ENCODE measurements at regions of chr3 and their contacts with region 1.

Region 1: DNA sequence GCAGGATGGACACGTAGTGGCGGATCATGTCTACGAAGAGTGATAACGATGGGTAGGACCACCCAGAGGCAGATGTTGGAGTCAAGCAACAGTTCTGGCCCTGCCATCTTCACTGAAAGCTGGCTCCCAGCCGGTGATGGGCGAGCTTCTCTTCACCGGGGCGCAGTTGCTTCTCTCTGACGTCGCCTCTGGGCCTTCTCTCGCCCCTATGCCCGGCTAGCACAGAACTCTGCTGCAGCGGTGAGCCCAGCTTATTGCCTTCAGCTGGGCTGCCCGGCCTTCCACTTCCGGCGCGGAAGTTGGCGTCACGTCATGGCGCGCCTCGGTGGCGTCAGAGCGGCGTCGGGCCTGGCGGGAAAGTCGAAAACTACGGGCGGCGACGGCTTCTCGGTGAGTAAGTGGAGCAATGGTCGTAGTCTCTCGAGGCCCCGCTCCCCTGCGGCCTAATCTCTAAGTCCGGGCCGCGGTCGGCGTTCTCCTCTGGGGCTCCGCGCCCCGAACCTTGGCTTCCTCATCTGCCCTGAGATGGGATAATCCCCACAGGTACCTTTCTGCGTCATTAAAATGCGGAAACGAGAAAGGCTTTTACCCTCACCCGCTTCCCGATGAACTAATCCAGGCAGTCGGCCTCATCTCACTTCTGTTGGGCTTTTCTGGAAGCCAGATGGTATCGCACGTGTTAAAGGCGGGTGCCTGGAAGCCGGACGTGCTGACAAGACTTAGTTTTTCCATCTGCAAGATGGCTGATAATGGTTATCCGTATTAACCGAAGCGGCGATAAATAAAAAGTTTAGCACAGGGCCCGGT is at the start of gene FANCD2:
- DNase-seq: peak; percentile 90
- H3K4me3 Mint-ChIP-seq: peak within 1 kb of the TSS; percentile 98
- H3K27ac Mint-ChIP-seq: peak within 1 kb of the TSS; percentile 99
- H3K4me1 Mint-ChIP-seq: peaks cover 33% of the 10 kb centered on the region
- H3K27me3 Mint-ChIP-seq: no peaks in the 10 kb centered on the region
- total RNA-seq, gene FANCD2: 63.4 and 64.2 TPM in 2 replicates

Region 2: DNA sequence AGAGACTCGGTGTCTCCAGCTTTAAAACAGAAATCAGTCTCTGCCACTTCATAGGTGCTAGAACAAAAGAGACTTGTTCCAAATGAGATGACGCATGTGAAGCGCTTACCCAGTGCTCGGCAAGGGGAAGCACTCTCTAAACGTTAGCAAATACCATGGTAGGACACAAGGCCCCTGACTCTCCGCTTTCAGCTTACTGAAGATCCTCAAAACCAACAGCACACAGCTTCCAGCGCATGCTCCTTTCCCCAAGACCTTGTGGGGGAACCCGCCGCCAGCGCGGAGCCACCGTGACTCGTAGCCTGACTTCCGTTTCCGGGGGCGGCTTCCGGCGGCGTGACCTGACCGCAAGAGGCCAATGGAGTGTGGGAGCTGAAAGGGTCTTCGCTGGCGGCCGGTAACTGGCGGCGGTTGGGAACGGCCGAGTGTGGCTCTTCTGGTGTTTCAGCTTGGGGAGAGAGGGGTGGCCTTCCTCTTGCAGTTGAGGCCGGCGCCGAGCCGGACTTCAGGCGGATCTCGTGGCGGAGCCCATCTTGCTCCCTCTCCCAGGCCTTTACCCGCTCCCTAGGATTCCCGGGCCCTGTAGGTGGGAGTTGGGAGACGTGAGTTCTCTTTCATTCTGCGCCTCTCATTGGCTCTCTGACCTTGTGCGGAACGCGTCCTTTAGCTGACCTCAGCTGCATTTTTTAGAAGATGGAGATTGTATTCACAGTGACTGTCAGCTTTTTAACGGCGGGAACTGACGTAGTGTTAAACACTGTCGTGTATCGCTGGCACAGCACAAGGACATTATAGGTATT is 663.4 kb before region 1 on chr3 and contains the start of gene THUMPD3:
- intact Hi-C with region 1: loop called (anchors 2 kb)
- DNase-seq: peak; percentile 90
- H3K4me3 Mint-ChIP-seq: peak within 1 kb of the TSS; percentile 96
- H3K27ac Mint-ChIP-seq: peak within 1 kb of the TSS; percentile 98
- H3K4me1 Mint-ChIP-seq: peaks cover 6% of the 10 kb centered on the region
- H3K27me3 Mint-ChIP-seq: peaks cover 2% of the 10 kb centered on the region
- total RNA-seq, gene THUMPD3: 61.4 and 62.4 TPM in 2 replicates

Region 3: DNA sequence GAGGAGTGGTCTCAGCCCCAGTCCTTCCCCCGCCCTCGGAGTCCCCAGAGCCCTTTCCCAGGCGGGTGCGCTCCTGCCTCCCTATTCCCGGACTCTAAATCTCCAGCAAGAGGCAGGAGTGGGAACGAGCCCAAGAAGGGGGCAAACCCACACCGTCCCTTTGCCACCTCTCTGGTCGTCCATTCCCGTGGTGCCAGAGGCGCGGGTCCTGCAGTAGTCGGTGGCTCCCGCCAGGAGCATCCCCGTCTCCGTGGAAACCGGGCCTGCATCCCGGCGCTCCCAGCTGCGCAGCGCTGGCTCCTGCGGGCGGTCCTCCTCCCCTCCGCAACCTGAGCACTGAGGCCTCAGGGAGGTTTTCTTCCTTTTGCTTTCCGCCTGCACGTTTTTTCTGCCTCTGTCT is 517.5 kb before region 1 on chr3:
- intact Hi-C with region 1: no loop called
- DNase-seq: no peak
- H3K4me3 Mint-ChIP-seq: no peak overlapping the region
- H3K27ac Mint-ChIP-seq: no peak overlapping the region
- H3K4me1 Mint-ChIP-seq: no peaks in the 10 kb centered on the region
- H3K27me3 Mint-ChIP-seq: peaks cover 22% of the 10 kb centered on the region

Region 4: DNA sequence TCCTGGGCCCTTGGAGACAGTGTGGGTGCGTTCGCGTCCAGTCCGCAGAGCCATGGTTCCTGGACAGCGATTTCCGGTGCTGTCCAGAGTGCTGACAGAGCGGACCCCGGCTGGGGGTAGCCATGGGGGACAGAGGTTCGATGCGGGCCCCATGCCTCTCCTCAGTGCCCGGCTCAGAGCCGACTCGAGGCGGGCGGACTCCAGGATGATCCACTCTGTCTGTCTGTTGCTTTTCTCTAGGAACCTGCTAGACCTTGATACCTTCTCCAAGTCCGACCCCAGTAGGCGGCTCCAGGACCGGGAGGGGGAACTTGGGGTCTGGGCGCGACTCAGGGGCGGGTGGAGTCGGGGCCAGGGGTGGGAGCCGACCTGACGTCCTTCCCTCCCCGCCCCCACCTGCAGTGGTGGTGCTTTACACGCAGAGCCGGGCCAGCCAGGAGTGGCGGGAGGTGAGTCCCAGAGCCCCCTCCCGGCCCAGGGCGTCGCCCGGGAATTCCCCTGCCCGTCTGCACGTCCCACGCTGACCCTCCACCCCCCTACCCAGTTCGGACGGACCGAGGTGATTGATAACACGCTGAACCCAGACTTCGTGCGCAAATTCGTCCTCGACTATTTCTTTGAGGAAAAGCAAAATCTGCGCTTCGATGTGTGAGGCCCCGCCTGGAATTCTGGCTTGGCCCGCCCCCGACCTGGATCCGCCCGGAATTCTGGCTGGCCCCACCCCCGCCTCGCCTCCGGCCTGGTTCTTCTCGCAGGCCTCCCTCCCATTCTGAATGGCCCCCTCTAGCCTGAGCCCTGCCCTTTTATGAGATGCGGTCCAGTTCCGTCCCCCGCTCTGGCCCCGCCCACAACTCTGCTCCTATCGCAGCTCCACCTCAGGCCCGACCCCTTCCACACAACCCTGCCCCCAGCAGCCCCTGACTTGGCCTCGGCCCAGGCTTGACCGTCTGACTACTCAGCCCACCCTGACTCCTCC is 321.7 kb before region 1 on chr3:
- intact Hi-C with region 1: no loop called
- DNase-seq: no peak
- H3K4me3 Mint-ChIP-seq: no peak overlapping the region
- H3K27ac Mint-ChIP-seq: no peak overlapping the region
- H3K4me1 Mint-ChIP-seq: no peaks in the 10 kb centered on the region
- H3K27me3 Mint-ChIP-seq: peaks cover 23% of the 10 kb centered on the region

Region 5: GRCh38 chr3:9843715-9844438 is 182.4 kb before region 1 on chr3 and contains the start of gene RPUSD3:
- intact Hi-C with region 1: loop called (anchors 1 kb)
- DNase-seq: peak; percentile 95
- H3K4me3 Mint-ChIP-seq: peak within 1 kb of the TSS; percentile 98
- H3K27ac Mint-ChIP-seq: peak within 1 kb of the TSS; percentile 91
- H3K4me1 Mint-ChIP-seq: peaks cover 28% of the 10 kb centered on the region
- H3K27me3 Mint-ChIP-seq: no peaks in the 10 kb centered on the region
- total RNA-seq, gene RPUSD3: 79.2 and 79.5 TPM in 2 replicates

Region 6: DNA sequence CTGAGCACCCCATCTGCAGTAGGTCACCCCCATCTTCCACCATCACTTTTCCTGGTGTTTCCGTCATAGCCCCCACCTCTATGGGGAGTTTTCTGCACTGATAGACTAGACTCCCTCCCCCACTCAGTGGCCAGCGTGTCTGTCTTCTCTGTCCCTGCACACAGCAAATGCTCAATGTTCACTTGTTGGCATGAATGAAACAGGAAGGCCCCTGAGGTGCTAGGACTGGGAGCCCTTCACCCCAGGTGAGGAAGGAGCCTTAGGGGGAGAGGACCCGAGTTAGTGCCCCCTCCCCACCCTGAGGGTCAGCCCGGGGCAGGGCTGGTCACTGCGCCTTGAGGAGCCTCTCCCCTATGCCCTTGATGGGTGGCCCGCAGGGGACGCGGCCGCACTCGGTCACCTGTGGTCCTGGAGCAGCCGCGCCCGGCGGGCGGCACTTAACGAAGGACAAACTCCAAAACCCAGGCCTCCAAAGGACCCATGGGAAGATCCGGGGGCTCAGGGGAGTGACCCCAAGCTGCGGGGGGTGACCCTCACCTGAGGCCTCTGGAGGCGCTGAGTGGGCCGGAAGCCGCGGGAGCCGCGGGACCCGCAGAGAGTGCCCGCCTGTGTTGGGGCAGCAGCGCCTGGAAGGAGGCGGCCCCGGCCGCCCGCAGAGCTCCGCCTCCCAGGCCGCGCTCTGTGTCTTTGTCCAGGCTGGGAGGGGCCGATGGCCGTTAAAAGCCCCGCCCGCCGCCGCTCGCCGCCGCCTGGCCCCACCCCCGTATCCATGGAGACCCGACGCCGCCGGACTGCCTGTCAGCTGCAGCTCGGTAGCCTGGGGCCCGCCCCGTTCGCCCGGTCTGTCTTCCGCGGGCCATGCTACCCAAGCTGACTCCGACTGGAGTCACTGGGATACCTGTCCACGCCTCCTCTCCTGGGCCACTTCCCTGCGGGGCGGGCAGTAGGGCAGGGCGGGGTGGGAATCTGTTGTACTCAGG is 15.5 kb before region 1 on chr3:
- intact Hi-C with region 1: loop called (anchors 1 kb)
- DNase-seq: peak; percentile 85
- H3K4me3 Mint-ChIP-seq: peak overlapping the region; percentile 70
- H3K27ac Mint-ChIP-seq: no peak overlapping the region
- H3K4me1 Mint-ChIP-seq: peaks cover 29% of the 10 kb centered on the region
- H3K27me3 Mint-ChIP-seq: peaks cover 4% of the 10 kb centered on the region

Region 7: DNA sequence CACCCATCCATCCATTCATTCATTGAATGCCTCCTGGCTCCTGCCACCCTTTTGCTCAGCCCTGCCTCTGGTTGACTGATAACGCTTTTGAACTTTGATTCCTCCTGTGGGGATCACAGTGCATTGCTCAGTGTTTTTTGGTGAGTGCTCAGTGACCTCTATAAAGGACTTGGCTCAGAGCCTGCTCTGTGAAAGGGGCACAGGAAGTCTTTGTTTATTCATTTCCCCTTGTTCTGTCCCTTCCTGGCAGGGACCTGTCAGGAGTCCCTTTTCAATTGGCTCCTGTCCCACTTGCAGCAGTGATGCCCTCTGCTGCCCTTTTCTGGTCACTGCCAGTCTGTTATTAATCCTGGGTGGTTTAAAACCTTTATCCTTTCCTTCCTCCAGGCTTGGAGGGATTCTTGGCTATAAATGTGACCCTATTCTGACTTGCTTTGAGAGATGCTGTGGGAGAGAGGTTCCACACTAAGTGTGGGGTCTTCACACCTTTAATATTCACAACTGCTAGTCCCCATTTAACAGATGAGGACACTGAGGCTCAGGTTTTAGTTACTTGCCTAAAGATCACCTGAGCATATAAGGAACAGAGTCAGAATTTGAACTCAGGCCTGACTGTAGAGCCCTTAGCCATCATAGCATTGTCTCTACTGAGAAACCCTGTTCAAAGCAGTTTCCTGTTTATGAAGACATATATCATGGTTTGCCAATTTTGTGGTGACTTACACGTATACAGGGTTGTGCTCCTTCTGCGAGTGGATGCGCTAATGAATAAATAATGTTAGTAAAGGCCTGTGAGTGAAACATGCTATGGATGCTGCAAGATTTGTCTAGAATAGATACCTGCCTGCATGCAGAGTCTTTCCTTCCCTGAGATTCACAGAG is 198.7 kb after region 1 on chr3:
- intact Hi-C with region 1: loop called (anchors 1 kb)
- DNase-seq: peak; percentile 45
- H3K4me3 Mint-ChIP-seq: peak overlapping the region; percentile 73
- H3K27ac Mint-ChIP-seq: peak overlapping the region; percentile 97
- H3K4me1 Mint-ChIP-seq: peaks cover 74% of the 10 kb centered on the region
- H3K27me3 Mint-ChIP-seq: peaks cover 3% of the 10 kb centered on the region

Region 8: GRCh38 chr3:10263646-10264363 is 237.5 kb after region 1 on chr3:
- intact Hi-C with region 1: no loop called
- DNase-seq: peak; percentile 51
- H3K4me3 Mint-ChIP-seq: peak overlapping the region; percentile 79
- H3K27ac Mint-ChIP-seq: peak overlapping the region; percentile 80
- H3K4me1 Mint-ChIP-seq: peaks cover 74% of the 10 kb centered on the region
- H3K27me3 Mint-ChIP-seq: no peaks in the 10 kb centered on the region

Region 9: GRCh38 chr3:10322352-10322710 is 296.0 kb after region 1 on chr3:
- intact Hi-C with region 1: loop called (anchors 1 kb)
- DNase-seq: peak; percentile 24
- H3K4me3 Mint-ChIP-seq: peak overlapping the region; percentile 30
- H3K27ac Mint-ChIP-seq: no peak overlapping the region
- H3K4me1 Mint-ChIP-seq: peaks cover 30% of the 10 kb centered on the region
- H3K27me3 Mint-ChIP-seq: peaks cover 13% of the 10 kb centered on the region

Measured in activated T-helper 1 cell treated with anti-CD3 and anti-CD28 coated beads, Interleukin-12 subunit alpha, Interleukin-12 subunit beta, Interleukin-2, Interleukin-4 antibody, amounts not matched to agents 30 ng/mL and 10 ng/mL and 1 ng/mL, durations not matched to agents 14 hours and 24 hours and 36 hours (primary cell).